Psoas muscle (tissue), 8 donors: ENCODE measurements at regions of chr5 and their contacts with region 1.

Region 1: DNA sequence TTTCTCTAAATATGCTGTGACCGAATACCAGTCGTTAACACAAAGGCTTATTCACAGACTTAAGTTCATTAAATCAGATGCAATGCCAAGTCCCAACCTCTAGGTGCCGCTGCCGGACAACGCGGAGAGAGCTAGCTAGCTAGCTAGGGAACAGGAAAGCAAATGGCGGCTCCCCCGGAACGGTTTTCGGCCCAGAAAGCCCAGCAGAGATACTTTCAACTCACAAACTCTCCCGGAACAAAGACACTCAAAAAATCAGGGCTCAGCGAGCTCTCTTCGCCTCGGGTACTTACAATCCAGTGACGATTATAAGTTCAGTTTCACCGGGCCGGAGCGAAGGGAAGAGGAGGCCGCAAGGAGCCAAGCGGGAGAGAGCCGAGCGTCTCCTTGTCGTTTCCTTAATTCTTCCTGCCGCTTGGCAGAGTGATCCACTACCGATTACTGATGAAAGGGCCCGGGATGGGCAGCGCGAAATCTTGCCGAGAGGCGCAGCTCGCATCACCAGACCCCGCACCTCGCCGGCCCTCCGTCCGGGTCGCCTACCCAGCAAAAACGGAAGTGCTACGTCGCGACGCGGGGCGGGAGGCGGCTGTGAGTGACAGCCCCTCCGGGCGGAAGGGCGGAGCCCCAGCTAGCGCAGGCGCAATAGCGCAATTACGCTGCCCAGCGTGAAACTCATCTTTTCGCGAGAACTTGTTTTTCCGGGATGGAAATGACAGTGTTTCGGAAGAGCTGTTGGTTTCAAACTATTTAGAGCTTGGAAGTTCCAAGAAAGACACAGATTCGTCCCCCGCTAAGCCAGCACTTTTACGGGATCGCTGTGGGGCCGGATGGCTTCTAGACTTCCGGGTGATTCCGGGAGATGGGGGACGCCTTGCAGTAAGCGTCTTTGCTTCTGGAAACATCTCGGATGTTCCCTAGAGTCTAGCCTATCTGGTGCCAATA is at the start of gene TAF7:
- DNase-seq: peak; percentile 91 to 97
- ATAC-seq: peak; percentile 96 to 99 (median 98)
- H3K4me3 ChIP-seq: peak within 1 kb of the TSS; percentile 81
- H3K27ac ChIP-seq: peak within 1 kb of the TSS; percentile 98
- H3K4me1 ChIP-seq: peaks cover 17% of the 10 kb centered on the region
- H3K27me3 ChIP-seq: no peaks in the 10 kb centered on the region
- CTCF ChIP-seq: peak; percentile 89
- total RNA-seq, gene TAF7: 92.9 to 139 (median 117) TPM

Region 2: DNA sequence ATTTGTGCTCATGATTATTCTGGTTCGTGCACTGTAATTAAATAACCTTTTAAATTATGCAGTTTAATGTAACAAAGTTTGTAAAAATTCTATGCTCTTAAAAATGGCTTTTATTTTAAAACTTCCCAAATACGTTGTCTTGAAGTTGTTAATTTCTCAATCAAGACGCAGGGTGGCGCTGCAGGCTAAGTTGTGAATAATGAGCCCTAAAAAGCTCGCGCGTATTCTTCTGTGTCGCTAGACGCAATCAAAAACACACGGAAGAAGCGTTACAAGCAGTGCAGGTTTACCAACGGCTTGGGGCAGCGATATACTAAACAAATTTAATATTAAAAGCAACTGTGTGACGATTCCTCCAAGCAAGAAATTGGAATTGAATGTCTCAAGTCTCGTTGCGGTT is 198.9 kb before region 1 on chr5 and contains the start of gene PCDHB4:
- intact Hi-C with region 1: loop called in 1 of 2 experiments (anchors 10 kb)
- DNase-seq: peak; percentile 32 to 61
- ATAC-seq: peak in 1 of 4 donors; percentile 78
- H3K4me3 ChIP-seq: peak within 1 kb of the TSS; percentile 57
- H3K27ac ChIP-seq: no peak within 1 kb of the TSS
- H3K4me1 ChIP-seq: no peaks in the 10 kb centered on the region
- H3K27me3 ChIP-seq: peaks cover 0 to 2% (median 0%) of the 10 kb centered on the region in 3 donors
- CTCF ChIP-seq: peak; percentile 46
- total RNA-seq, gene PCDHB4: 0.77 to 2.0 (median 1.8) TPM